ENCODE measurements at regions of chr17 and their contacts with region 1.

Region 1: GRCh38 chr17:57747221-57748017 is 2.3 kb upstream of the CCDC182 start:
- DNase-seq: no peak
- H3K4me3 ChIP-seq: no peak overlapping the region
- H3K27ac ChIP-seq: no peak overlapping the region
- H3K4me1 ChIP-seq: no peaks in the 10 kb centered on the region
- H3K27me3 ChIP-seq: no peaks in the 10 kb centered on the region
- CTCF ChIP-seq: peak; percentile 19 to 60 (median 58)
- POLR2A ChIP-seq: no peak

Region 2: GRCh38 chr17:57243171-57243948 is 504.1 kb before region 1 on chr17:
- intact Hi-C with region 1: loop called (anchors 10 kb)
- DNase-seq: no peak
- H3K4me3 ChIP-seq: no peak overlapping the region
- H3K27ac ChIP-seq: no peak overlapping the region
- H3K4me1 ChIP-seq: no peaks in the 10 kb centered on the region
- H3K27me3 ChIP-seq: no peaks in the 10 kb centered on the region
- CTCF ChIP-seq: peak; percentile 92 to 99 (median 98)
- POLR2A ChIP-seq: no peak